Tibial artery (tissue), 4 donors: ENCODE measurements at regions of chr17 and their contacts with region 1.

Region 1: DNA sequence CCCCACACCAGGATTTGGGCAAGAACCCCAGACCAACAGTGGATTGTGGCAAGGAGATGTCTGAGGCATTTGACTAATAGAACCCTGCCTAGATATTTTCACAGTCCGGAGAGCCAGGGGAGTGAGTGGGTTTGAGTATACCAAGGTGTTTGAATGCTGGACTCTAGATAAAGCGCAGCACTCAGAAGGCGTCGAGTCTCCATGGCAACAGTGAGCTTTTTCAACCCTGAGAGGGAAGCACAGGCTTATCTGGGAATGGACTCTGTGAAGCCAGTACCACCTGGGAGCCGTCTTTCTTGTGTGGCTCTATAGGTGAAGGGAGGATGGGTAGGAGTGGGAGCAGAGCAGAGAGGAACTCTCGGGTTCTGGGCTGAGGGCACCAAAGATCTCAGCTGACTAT is 147.0 kb downstream of the SHISA6 start:
- DNase-seq: no peak
- H3K4me3 ChIP-seq: no peak overlapping the region
- H3K27ac ChIP-seq: no peak overlapping the region
- H3K4me1 ChIP-seq: no peaks in the 10 kb centered on the region
- H3K27me3 ChIP-seq: no peaks in the 10 kb centered on the region
- CTCF ChIP-seq: no peak

Region 2: GRCh38 chr17:10631048-10631700 is 756.9 kb before region 1 on chr17:
- intact Hi-C with region 1: no loop called
- DNase-seq: no peak
- H3K4me3 ChIP-seq: no peak overlapping the region
- H3K27ac ChIP-seq: no peak overlapping the region
- H3K4me1 ChIP-seq: no peaks in the 10 kb centered on the region
- H3K27me3 ChIP-seq: no peaks in the 10 kb centered on the region
- CTCF ChIP-seq: peak; percentile 58 to 87

Region 3: DNA sequence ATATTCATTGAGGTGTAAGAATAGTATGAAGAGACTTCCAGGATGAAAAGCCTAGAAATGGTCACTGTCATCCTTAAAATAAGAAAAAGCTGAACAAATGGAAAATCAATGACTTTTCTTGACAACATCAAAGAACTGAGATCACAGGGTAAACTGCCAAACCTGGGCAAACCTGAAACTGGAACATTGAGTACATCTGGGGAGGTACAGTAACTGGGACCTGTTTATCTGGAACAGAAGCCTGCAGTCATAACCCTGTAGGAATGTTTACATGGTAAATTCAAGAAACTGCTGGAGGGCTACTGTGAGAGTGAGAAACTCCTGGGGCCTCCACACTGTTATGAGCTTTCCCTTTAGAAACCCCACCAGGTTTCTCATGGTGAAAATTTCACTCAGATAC is 420.0 kb before region 1 on chr17:
- intact Hi-C with region 1: no loop called
- DNase-seq: no peak
- H3K4me3 ChIP-seq: no peak overlapping the region
- H3K27ac ChIP-seq: no peak overlapping the region
- H3K4me1 ChIP-seq: no peaks in the 10 kb centered on the region
- H3K27me3 ChIP-seq: no peaks in the 10 kb centered on the region
- CTCF ChIP-seq: no peak

Region 4: DNA sequence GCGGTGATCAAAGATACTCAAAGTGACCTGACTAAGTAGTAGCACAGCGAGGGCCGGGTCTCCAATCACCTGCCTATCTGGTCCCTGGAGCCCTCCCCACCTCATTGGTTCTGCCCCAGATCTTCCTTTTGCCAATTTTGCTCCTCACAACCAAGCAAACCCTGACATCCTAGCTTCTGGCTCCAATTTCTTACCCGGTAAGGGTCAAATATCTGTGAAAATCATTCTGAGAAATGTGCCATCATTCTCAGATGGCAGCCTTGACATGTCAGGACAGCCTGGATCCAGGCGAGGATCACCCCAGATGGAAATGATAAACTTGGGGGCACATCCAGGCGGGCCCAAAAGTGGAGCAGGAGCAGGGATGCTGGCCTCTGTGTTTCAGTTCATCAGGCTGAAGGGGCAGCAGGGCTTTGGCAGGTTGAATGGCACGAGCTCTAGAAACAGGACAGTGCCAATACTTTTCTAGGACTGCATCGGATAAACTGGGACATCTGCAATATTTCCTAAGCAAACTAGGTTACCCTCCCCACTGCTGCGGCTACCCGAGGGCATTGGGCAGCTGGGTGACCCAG is 63.1 kb before region 1 on chr17:
- intact Hi-C with region 1: loop called (anchors 10 kb)
- DNase-seq: no peak
- H3K4me3 ChIP-seq: no peak overlapping the region
- H3K27ac ChIP-seq: no peak overlapping the region
- H3K4me1 ChIP-seq: no peaks in the 10 kb centered on the region
- H3K27me3 ChIP-seq: no peaks in the 10 kb centered on the region
- CTCF ChIP-seq: no peak